ENCODE measurements at regions of chr11 and their contacts with region 1.

Region 1: DNA sequence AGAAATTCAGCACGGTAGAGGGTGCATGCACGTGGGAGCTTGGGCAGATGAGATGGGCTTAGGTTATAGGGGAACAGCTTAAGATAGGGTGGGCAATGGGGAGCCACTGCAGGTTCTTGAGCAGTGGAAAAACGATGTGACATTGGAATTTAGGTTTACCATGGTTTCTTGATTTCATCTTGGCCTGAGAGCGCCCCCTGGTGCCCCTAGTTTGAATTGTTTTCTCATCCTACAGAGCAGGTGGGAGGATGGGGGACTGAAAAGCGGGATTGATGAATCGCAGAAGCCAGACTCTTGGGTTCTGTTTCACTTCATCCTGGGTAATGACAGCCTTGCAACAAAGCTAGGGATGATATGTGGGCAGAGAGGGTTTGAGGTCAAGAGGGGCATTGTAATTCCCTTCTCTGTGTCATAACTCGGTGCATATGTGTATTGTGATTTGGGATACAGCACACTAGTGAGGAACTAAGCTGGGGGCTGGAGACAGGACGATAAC is 6.7 kb upstream of the MCAM start:
- DNase-seq: peak; percentile 64
- CTCF ChIP-seq: peak; percentile 89

Region 2: DNA sequence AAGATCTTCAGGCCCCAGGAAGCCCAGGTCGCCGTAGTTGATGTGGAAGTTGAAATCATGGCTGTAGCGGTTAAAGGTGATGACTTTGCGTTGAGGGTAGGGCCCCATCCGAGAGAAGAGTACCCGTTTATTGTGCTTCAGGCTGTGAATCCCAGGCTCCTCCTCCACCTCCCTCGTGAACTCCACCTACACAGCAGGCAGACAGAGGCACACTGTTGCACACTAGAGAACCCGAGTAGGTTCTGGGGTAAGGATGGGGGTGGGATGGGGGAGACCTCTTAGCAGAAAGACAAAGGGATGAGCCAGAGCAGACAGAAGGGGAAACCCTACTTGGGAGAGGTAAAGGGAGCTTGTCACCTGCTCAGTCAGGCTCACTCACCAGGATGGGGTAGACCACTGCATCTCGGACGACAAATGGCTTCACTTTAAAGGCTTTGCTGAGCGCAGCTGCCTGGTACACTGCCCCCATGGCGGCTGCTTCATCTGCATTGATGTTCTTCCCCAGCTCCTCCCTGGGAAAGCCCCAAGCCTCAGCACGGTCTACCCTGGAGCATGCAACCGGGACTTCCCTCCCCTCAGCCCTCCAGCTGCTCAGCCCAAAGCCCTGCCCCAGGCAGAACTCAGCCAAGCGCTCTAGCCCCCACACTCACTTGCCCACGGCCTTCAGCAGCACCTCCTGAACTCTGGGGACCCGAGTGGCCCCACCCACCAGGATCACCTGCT is 272.0 kb before region 1 on chr11:
- CTCF ChIA-PET with region 1: interaction called, 11 read pairs
- POLR2A ChIA-PET with region 1: no interaction called
- DNase-seq: peak; percentile 79
- CTCF ChIP-seq: no peak

Region 3: GRCh38 chr11:119108146-119108856 is 215.3 kb before region 1 on chr11:
- CTCF ChIA-PET with region 1: interaction called, 11 read pairs
- POLR2A ChIA-PET with region 1: interaction called, 4 read pairs
- DNase-seq: peak; percentile 51
- CTCF ChIP-seq: no peak

Region 4: GRCh38 chr11:119168471-119169281 is 154.9 kb before region 1 on chr11 and contains the start of gene NLRX1:
- CTCF ChIA-PET with region 1: interaction called, 26 read pairs
- POLR2A ChIA-PET with region 1: no interaction called
- DNase-seq: peak; percentile 96
- CTCF ChIP-seq: peak; percentile 98

Region 5: DNA sequence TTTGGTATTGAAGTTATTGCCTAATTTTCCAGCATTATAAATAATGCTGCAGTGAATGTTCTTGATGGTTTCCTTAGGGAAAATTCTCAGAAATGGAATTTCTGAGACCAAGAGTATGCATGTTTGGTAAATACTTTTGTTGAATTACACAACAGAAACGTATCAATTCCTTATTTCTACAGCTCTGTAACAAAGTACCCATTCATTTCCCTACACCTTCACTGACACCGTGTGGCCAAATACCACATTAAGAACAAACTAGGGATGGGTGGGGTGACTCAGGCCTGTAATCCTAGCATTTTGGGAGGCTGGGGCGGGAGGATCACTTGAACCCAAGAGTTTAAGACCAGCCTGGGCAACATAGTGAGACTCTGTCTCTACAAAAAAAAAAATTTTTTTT is 28.4 kb before region 1 on chr11:
- CTCF ChIA-PET with region 1: interaction called, 11 read pairs
- POLR2A ChIA-PET with region 1: no interaction called
- DNase-seq: no peak
- CTCF ChIP-seq: peak; percentile 21

Region 6: GRCh38 chr11:119347242-119347641 is 23.7 kb after region 1 on chr11:
- CTCF ChIA-PET with region 1: interaction called, 44 read pairs
- POLR2A ChIA-PET with region 1: no interaction called
- DNase-seq: no peak
- CTCF ChIP-seq: no peak